Adrenal gland (tissue), 19 donors: ENCODE measurements at regions of chr12 and their contacts with region 1.

Region 1: DNA sequence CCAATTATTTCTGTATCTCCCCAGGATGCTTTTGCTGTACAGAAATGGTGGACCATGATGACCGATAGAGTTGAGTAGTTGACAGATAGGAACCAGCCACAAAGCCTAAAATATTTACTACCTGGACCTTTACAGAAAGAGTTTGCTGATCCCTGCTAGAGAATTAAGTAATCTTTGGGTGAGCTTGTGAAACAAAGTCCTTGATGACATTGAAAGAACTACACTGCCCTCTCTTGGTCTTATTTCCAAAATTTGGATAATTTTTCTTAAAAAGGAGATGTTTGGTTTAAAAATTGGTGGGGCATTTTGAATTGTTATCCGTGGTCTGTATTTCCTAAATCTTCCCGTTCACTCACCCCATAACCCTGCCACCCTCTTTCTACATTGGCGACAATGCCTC is 13.7 kb upstream of the TCTN1 start:
- DNase-seq: peak in 1 of 7 donors; percentile 7
- H3K4me3 ChIP-seq: no peak overlapping the region
- H3K27ac ChIP-seq: no peak overlapping the region
- H3K4me1 ChIP-seq: no peaks in the 10 kb centered on the region
- H3K27me3 ChIP-seq: no peaks in the 10 kb centered on the region
- CTCF ChIP-seq: peak; percentile 17 to 79 (median 64)
- POLR2A ChIP-seq: no peak

Region 2: DNA sequence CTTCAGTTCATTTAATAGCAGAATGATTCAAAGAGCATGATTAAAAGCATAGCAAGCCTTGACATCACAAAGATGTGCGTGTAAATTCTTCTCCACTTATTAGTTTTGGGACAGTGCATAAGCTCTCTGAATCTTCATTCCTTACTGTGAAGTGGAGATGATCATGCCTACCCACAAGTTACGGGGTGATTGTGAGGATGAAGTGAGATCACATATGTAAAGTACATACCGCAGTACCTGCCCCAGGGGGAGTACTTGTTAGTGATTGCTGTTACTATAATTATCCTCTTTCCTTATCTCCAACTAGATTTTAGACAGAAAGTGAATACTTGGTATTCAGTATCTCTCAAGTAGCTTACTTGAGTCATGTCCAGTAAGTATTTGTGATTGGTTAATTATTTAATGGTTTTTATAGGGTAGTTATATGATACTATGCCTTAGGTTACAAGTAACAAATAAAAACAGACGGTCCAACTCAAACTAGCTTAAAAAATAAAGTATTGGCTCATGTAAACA is 92.1 kb before region 1 on chr12:
- intact Hi-C with region 1: loop called (anchors 2 to 5 kb)
- DNase-seq: no peak
- H3K4me3 ChIP-seq: no peak overlapping the region
- H3K27ac ChIP-seq: no peak overlapping the region
- H3K4me1 ChIP-seq: peaks cover 0 to 4% of the 10 kb centered on the region in 2 donors
- H3K27me3 ChIP-seq: no peaks in the 10 kb centered on the region
- CTCF ChIP-seq: no peak
- POLR2A ChIP-seq: no peak

Region 3: DNA sequence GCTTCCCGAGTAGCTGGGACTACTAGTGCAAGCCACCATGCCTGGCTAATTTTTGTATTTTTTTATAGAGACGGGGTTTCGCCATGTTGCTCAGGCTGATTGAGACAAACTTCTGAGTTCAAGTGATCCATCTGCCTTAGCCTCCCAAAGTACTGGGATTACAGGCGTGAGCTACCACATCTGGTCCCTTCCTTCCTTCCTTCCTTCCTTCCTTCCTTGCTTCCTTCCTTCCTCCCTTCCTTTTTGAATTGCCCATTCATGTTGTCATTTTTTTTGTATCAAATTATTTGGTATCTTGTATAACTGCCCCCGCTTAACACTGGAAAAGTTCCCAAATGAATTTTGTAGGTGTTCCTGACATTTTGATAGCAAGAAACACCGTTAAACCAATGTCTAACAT is 86.4 kb before region 1 on chr12:
- intact Hi-C with region 1: loop called (anchors 2 to 5 kb)
- DNase-seq: no peak
- H3K4me3 ChIP-seq: no peak overlapping the region
- H3K27ac ChIP-seq: no peak overlapping the region
- H3K4me1 ChIP-seq: peaks cover 0 to 4% of the 10 kb centered on the region in 2 donors
- H3K27me3 ChIP-seq: no peaks in the 10 kb centered on the region
- CTCF ChIP-seq: no peak
- POLR2A ChIP-seq: no peak

Region 4: GRCh38 chr12:110549716-110550115 is 50.5 kb before region 1 on chr12:
- intact Hi-C with region 1: loop called (anchors 5 kb)
- DNase-seq: no peak
- H3K4me3 ChIP-seq: no peak overlapping the region
- H3K27ac ChIP-seq: peak overlapping the region in 2 of 5 donors; percentile 2 to 3
- H3K4me1 ChIP-seq: peaks cover 0 to 30% of the 10 kb centered on the region in 2 donors
- H3K27me3 ChIP-seq: no peaks in the 10 kb centered on the region
- CTCF ChIP-seq: no peak
- POLR2A ChIP-seq: no peak